Activated B cell treated with CpG ODN at 0.5 μM for 24 hours (primary cell): ENCODE measurements at regions of chr14 and their contacts with region 1.

Region 1: GRCh38 chr14:62081012-62081612 is 318.9 kb downstream of the SNAPC1 start:
- DNase-seq: peak; percentile 44
- ATAC-seq: peak; percentile 69
- H3K4me3 Mint-ChIP-seq: peak overlapping the region; percentile 78
- H3K27ac Mint-ChIP-seq: peak overlapping the region; percentile 94
- H3K4me1 Mint-ChIP-seq: peaks cover 80% of the 10 kb centered on the region
- H3K27me3 Mint-ChIP-seq: no peaks in the 10 kb centered on the region
- CTCF ChIP-seq: no peak

Region 2: DNA sequence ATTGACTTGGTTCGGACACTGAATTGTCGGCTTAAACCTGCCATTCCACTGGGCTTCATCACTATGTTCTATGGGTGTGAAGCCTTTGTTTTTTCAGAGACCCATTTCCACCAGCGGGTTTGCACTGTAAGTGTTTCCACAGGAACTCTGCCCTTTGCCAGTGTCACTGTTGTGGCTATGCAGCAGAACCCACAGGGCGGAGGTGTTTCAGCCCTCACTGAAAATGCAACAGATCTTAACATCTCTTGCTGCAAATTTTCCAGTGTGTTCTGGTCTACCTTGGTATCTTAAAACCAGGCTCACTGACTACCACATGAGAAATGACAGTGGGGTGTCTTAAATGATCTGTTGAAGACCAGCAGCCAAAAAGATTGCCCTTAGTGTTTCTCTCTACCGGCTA is 738.6 kb before region 1 on chr14:
- CTCF ChIA-PET with region 1: no interaction called
- POLR2A ChIA-PET with region 1: no interaction called
- intact Hi-C with region 1: no loop called
- DNase-seq: no peak
- ATAC-seq: peak; percentile 10
- H3K4me3 Mint-ChIP-seq: no peak overlapping the region
- H3K27ac Mint-ChIP-seq: no peak overlapping the region
- H3K4me1 Mint-ChIP-seq: peaks cover 21% of the 10 kb centered on the region
- H3K27me3 Mint-ChIP-seq: peaks cover 3% of the 10 kb centered on the region
- CTCF ChIP-seq: no peak

Region 3: GRCh38 chr14:61761959-61762786 is 318.9 kb before region 1 on chr14 and contains the start of gene SNAPC1:
- CTCF ChIA-PET with region 1: no interaction called
- POLR2A ChIA-PET with region 1: no interaction called
- intact Hi-C with region 1: loop called (anchors 2 kb)
- DNase-seq: peak; percentile 90
- ATAC-seq: peak; percentile 98
- H3K4me3 Mint-ChIP-seq: peak within 1 kb of the TSS; percentile 95
- H3K27ac Mint-ChIP-seq: peak within 1 kb of the TSS; percentile 95
- H3K4me1 Mint-ChIP-seq: peaks cover 31% of the 10 kb centered on the region
- H3K27me3 Mint-ChIP-seq: no peaks in the 10 kb centered on the region
- CTCF ChIP-seq: no peak
- total RNA-seq, gene SNAPC1: 5.2 TPM in 2 replicates

Region 4: GRCh38 chr14:61860294-61860918 is 220.7 kb before region 1 on chr14:
- CTCF ChIA-PET with region 1: no interaction called
- POLR2A ChIA-PET with region 1: no interaction called
- intact Hi-C with region 1: loop called (anchors 2 kb)
- DNase-seq: peak; percentile 53
- ATAC-seq: peak; percentile 100
- H3K4me3 Mint-ChIP-seq: no peak overlapping the region
- H3K27ac Mint-ChIP-seq: no peak overlapping the region
- H3K4me1 Mint-ChIP-seq: peaks cover 6% of the 10 kb centered on the region
- H3K27me3 Mint-ChIP-seq: peaks cover 4% of the 10 kb centered on the region
- CTCF ChIP-seq: peak; percentile 25

Region 5: DNA sequence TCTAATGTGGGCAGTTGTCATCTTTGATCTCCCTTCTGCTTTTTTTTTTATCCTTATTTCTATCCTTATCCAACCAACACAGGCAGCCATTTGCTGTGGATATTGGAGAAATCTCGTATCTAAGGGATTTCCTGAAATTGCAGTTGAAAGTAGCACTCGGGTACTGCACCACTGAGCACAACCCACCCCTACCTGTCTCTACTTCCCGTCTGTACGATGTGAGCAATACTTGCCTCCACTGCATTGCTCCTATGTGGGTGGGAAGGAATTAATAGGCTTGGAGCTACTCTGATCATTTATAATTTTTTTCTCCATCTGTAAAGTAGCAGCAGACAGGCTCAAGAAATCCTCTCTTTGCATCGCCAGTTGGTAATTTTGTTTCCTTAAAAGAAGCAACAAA is 18.5 kb before region 1 on chr14:
- CTCF ChIA-PET with region 1: no interaction called
- POLR2A ChIA-PET with region 1: interaction called, 3 read pairs
- intact Hi-C with region 1: loop called (anchors 2 kb)
- DNase-seq: no peak
- ATAC-seq: peak; percentile 78
- H3K4me3 Mint-ChIP-seq: peak overlapping the region; percentile 68
- H3K27ac Mint-ChIP-seq: no peak overlapping the region
- H3K4me1 Mint-ChIP-seq: peaks cover 28% of the 10 kb centered on the region
- H3K27me3 Mint-ChIP-seq: no peaks in the 10 kb centered on the region
- CTCF ChIP-seq: no peak

Region 6: GRCh38 chr14:62097072-62097471 is 16.0 kb after region 1 on chr14:
- CTCF ChIA-PET with region 1: no interaction called
- POLR2A ChIA-PET with region 1: interaction called, 4 read pairs
- intact Hi-C with region 1: loop called (anchors 1 kb)
- DNase-seq: no peak
- ATAC-seq: peak; percentile 58
- H3K4me3 Mint-ChIP-seq: no peak overlapping the region
- H3K27ac Mint-ChIP-seq: no peak overlapping the region
- H3K4me1 Mint-ChIP-seq: peaks cover 10% of the 10 kb centered on the region
- H3K27me3 Mint-ChIP-seq: no peaks in the 10 kb centered on the region
- CTCF ChIP-seq: no peak